Activated CD4-positive, alpha-beta T cell treated with anti-CD3 and anti-CD28 coated beads, Interleukin-2, amount 10 ng/mL, durations not matched to agents 24 days and 14 days (primary cell): ENCODE measurements at regions of chr1 and their contacts with region 1.

Region 1: DNA sequence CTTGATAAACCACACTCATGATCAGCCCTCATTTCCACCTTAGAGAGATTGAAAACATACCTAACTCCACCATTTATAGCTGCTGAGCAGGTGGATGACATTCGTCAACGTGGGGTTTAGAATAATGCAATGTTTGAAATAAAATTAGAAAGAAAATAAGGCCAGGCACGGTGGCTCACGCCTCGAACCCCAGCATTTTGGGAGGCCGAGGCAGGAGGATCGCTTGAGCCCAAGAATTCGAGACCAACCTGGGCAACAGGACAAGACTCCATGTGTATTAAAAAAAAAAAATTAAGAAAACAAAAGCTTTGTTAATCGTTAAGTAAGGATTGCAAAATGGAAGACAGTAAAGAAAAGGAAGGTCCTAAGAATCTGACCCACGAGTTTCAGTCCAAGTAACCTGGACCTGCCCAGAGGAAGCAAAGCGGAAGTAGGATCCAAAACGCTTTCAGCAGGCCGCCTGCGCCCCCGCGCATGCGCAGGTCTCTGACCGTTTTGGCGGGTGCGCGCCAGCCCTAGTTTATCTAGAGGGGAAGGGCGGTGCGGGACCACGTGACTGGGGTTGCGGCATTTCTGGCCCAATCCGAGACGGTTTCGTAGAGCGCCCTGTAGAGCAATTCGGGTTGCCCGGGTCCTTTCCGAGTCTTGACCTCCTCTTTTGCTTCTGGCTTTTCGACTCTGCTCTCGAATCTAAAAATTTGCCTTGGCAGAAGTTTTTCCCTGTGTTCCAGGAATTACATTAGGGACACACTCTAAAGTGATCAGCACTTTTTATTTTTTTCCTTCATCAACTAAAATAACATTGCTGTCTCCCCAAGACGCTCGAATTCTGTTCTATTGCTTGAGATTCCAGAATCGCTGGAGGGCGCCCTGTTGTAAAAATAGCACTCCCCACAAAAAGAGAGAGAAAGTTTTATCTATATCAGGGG is 22.5 kb downstream of the ANP32E start:
- DNase-seq: peak; percentile 97
- H3K4me3 Mint-ChIP-seq: peak overlapping the region; percentile 91
- H3K27ac Mint-ChIP-seq: peak overlapping the region; percentile 96
- H3K4me1 Mint-ChIP-seq: peaks cover 15% of the 10 kb centered on the region
- H3K27me3 Mint-ChIP-seq: peaks cover 5% of the 10 kb centered on the region

Region 2: DNA sequence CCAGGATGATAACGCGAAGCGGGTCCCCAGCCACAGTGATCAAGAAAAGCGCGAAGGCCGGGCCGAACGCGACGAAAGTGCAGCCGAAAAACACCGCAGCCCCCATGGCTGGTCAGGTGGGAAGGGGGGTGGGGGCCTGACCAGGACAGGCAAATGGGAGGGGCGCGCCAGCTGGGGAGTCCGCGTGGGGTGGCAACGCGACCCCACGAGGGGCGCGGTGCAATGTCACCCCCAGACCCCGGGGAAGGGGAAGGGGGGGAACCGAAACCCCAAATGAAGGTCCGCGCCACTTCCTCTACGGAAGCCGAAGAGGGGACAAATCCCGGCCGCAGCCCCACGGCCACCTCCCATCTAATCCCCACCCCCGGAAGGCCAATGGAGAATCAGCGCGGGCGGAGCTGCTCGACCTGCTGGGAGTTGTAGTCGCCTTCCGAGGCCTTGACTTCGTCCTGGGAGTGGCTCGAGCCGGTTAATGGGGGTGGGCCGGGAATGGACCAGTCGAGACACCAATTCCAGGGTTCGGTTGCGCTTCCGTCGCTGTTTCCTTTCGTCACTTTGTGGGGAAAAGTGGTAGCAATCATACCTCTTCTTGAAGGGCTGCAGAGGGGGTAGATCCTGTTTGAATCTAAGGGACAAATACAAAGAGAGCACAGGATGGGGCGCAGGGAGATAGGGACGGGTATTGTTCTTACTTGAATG is 55.4 kb after region 1 on chr1 and contains the start of gene APH1A:
- intact Hi-C with region 1: loop called (anchors 2 kb)
- DNase-seq: peak; percentile 98
- H3K4me3 Mint-ChIP-seq: peak within 1 kb of the TSS; percentile 98
- H3K27ac Mint-ChIP-seq: peak within 1 kb of the TSS; percentile 96
- H3K4me1 Mint-ChIP-seq: peaks cover 31% of the 10 kb centered on the region
- H3K27me3 Mint-ChIP-seq: no peaks in the 10 kb centered on the region
- total RNA-seq, gene APH1A: 101 and 105 TPM in 2 replicates